Pancreas (tissue), 10 donors: ENCODE measurements at regions of chr1 and their contacts with region 1.

Region 1: DNA sequence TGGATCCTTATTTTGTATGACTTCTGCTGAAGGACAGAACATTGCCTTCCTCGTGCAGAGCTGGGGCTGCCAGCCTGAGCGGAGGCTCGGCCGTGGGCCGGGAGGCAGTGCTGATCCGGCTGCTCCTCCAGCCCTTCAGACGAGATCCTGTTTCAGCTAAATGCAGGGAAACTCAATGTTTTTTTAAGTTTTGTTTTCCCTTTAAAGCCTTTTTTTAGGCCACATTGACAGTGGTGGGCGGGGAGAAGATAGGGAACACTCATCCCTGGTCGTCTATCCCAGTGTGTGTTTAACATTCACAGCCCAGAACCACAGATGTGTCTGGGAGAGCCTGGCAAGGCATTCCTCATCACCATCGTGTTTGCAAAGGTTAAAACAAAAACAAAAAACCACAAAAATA is 27.5 kb upstream of the KDM4A start:
- DNase-seq: peak in 1 of 6 donors; percentile 50
- ATAC-seq: peak in 1 of 4 donors; percentile 27
- H3K4me3 ChIP-seq: no peak overlapping the region
- H3K27ac ChIP-seq: no peak overlapping the region
- H3K4me1 ChIP-seq: no peaks in the 10 kb centered on the region
- H3K27me3 ChIP-seq: no peaks in the 10 kb centered on the region
- CTCF ChIP-seq: no peak

Region 2: DNA sequence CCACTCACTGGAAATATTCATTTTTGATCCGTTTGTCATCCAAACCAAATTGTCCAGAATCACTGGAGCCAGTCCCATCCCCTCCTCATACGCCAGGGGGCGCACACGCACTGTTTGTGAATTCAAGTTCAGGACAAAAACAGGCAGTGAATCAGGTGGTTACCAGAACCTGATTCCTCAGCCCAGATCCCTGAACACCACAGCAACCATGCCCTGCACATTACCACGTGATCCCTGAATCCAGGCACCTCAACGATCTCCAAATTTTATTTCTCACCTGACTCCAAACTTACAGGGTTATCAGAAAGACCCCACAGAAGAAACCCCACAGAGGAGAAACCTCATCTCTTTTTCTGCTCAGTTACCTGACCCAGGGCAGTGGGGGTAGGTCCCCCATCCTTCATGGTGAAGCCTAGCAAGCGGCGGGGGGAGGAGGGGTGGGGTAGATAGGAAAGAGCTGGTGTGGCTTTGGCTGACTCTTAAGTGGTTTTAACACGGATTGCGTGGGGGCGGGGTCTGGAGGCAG is 93.2 kb before region 1 on chr1:
- intact Hi-C with region 1: loop called in 1 of 3 experiments (anchors 10 kb)
- DNase-seq: peak; percentile 75 to 96 (median 89)
- ATAC-seq: peak; percentile 65 to 80 (median 74)
- H3K4me3 ChIP-seq: no peak overlapping the region
- H3K27ac ChIP-seq: no peak overlapping the region
- H3K4me1 ChIP-seq: peaks cover 0 to 16% (median 9%) of the 10 kb centered on the region in 3 donors
- H3K27me3 ChIP-seq: no peaks in the 10 kb centered on the region
- CTCF ChIP-seq: peak; percentile 81 to 94 (median 90)